CD4-positive, alpha-beta T cell (primary cell): ENCODE measurements at regions of chr14 and their contacts with region 1.

Region 1: GRCh38 chr14:75654127-75654732 is 6.4 kb downstream of the ERG28 start:
- DNase-seq: peak; percentile 64 to 91 (median 78)
- ATAC-seq: peak; percentile 98
- H3K4me3 ChIP-seq: no peak overlapping the region
- H3K4me3 Mint-ChIP-seq: no peak overlapping the region
- H3K27ac ChIP-seq: no peak overlapping the region
- H3K27ac Mint-ChIP-seq: no peak overlapping the region
- H3K4me1 ChIP-seq: peaks cover 2% of the 10 kb centered on the region
- H3K4me1 Mint-ChIP-seq: peaks cover 18% of the 10 kb centered on the region
- H3K27me3 ChIP-seq: no peaks in the 10 kb centered on the region
- H3K27me3 Mint-ChIP-seq: no peaks in the 10 kb centered on the region
- CTCF ChIP-seq: peak; percentile 94

Region 2: GRCh38 chr14:75132382-75133086 is 521.7 kb before region 1 on chr14:
- CTCF ChIA-PET with region 1: no interaction called
- POLR2A ChIA-PET with region 1: no interaction called
- intact Hi-C with region 1: loop called in 1 of 2 experiments (anchors 5 kb)
- DNase-seq: peak in 9 of 14 experiments; percentile 6 to 87 (median 46)
- ATAC-seq: peak; percentile 95
- H3K4me3 ChIP-seq: no peak overlapping the region
- H3K4me3 Mint-ChIP-seq: no peak overlapping the region
- H3K27ac ChIP-seq: no peak overlapping the region
- H3K27ac Mint-ChIP-seq: peak overlapping the region; percentile 2
- H3K4me1 ChIP-seq: peaks cover 10% of the 10 kb centered on the region
- H3K4me1 Mint-ChIP-seq: peaks cover 15% of the 10 kb centered on the region
- H3K27me3 ChIP-seq: no peaks in the 10 kb centered on the region
- H3K27me3 Mint-ChIP-seq: no peaks in the 10 kb centered on the region
- CTCF ChIP-seq: peak; percentile 73

Region 3: DNA sequence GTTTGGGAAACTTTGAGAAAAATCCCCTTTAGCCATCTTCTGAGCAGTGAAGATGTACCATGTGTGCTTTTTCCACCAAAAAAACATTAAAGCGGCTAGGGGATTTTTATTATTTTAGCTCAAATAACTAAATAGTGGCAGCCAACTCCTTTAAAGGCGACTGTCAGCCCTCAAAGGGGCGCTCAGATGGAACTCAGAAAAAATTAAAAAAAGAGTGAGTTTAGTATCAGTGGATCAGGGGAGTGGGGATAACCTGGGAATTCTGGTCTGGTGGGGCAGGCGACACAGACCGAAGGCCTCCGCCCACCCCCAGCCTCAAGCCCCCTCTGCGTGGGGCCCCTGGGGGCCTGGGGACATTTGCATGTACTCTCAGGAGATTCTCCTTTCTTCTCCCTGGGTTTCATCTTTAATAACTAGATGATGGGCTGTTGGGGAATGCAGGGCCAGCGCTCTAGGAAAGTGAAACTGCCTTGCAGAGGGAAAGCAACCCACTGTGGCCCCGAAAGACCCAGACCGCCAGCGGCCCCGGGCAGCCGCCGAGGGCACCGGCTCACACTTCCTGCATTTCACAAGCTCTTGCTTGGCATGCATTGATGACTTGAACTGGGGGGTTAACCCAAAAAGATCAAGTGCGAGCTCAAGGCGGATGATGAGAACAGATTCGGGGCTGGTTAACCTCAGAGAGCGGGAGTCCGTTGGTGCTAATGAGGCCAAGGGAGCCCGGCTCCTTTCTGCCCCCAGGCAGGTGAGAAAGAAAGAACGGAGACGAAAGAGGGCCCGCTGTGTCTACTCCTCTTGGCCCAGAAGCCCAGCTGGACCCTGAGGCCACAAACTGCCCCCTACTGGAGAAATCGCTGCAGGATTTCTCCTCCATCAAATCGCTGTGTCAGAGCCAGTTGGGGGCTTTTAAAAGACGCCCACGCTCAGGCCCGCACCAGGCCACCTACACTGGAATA is 139.3 kb before region 1 on chr14:
- CTCF ChIA-PET with region 1: interaction called, 3 read pairs
- POLR2A ChIA-PET with region 1: no interaction called
- intact Hi-C with region 1: loop called (anchors 5 to 10 kb)
- DNase-seq: peak; percentile 20 to 80 (median 41)
- ATAC-seq: peak; percentile 77
- H3K4me3 ChIP-seq: peak overlapping the region; percentile 54
- H3K4me3 Mint-ChIP-seq: peak overlapping the region; percentile 89
- H3K27ac ChIP-seq: peak overlapping the region; percentile 29 to 67
- H3K27ac Mint-ChIP-seq: peak overlapping the region; percentile 72
- H3K4me1 ChIP-seq: peaks cover 38% of the 10 kb centered on the region
- H3K4me1 Mint-ChIP-seq: peaks cover 49% of the 10 kb centered on the region
- H3K27me3 ChIP-seq: no peaks in the 10 kb centered on the region
- H3K27me3 Mint-ChIP-seq: no peaks in the 10 kb centered on the region
- CTCF ChIP-seq: no peak

Region 4: DNA sequence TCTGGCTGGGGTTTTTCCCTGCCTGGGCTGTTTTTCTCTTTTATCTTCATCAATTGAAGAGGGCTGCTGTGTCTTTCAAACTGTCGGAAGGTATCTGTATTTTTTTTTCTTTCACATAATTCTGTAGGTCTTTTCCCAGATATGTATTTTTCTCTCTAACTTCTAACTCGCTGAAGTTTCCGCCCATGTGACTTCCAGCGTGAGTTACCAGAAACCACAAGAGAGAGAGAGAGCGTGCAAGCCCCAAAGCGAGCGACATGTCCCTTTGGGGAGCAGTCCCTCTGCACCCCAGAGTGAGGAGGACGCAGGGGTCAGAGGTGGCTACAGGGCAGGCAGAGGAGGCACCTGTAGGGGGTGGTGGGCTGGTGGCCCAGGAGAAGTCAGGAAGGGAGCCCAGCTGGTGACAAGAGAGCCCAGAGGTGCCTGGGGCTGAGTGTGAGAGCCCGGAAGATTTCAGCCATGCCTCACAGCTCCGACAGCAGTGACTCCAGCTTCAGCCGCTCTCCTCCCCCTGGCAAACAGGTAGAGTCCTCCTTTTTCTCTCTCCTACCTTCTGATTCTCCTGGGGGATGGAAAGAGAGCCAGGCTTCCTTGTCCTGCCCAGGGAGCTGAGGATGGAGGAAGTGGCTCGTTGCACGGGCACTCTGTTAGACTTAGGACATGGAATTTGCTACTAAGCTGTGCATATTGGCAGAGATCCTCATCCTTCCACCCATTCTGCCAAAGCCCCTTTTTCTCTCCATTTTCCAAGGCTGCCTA is 131.8 kb before region 1 on chr14 and contains the start of gene BATF:
- CTCF ChIA-PET with region 1: interaction called, 3 read pairs
- POLR2A ChIA-PET with region 1: no interaction called
- intact Hi-C with region 1: loop called (anchors 5 to 10 kb)
- DNase-seq: peak; percentile 57 to 91 (median 69)
- ATAC-seq: peak; percentile 80
- H3K4me3 ChIP-seq: peak within 1 kb of the TSS; percentile 67
- H3K4me3 Mint-ChIP-seq: peak within 1 kb of the TSS; percentile 100
- H3K27ac ChIP-seq: peak within 1 kb of the TSS; percentile 76 to 87
- H3K27ac Mint-ChIP-seq: peak within 1 kb of the TSS; percentile 96
- H3K4me1 ChIP-seq: peaks cover 69% of the 10 kb centered on the region
- H3K4me1 Mint-ChIP-seq: peaks cover 81% of the 10 kb centered on the region
- H3K27me3 ChIP-seq: no peaks in the 10 kb centered on the region
- H3K27me3 Mint-ChIP-seq: no peaks in the 10 kb centered on the region
- CTCF ChIP-seq: no peak
- total RNA-seq, gene BATF: 6.7 to 7.8 TPM

Region 5: DNA sequence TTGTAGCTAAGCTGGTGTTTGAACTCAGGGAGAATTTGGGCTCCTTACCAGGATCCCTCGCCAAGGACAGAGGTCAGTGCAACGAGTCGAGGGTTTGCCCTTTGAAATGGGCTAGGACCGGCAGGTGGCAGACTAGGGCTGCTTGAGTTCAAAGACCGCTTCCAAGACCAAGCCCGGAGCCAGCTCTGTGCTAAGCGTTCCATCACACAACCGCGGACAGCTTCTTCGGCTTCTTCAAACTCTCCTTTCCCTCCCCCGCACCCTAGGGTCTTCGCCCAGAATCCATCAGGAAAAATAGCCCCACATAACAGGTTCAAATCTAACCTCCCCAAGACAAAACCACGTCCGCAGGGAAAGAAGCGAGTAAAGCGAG is 76.5 kb before region 1 on chr14:
- CTCF ChIA-PET with region 1: interaction called, 47 read pairs
- POLR2A ChIA-PET with region 1: interaction called, 23 read pairs
- intact Hi-C with region 1: loop called (anchors 1 kb)
- DNase-seq: peak; percentile 46 to 85 (median 67)
- ATAC-seq: peak; percentile 85
- H3K4me3 ChIP-seq: peak overlapping the region; percentile 81
- H3K4me3 Mint-ChIP-seq: peak overlapping the region; percentile 92
- H3K27ac ChIP-seq: no peak overlapping the region
- H3K27ac Mint-ChIP-seq: peak overlapping the region; percentile 64
- H3K4me1 ChIP-seq: peaks cover 28% of the 10 kb centered on the region
- H3K4me1 Mint-ChIP-seq: peaks cover 25% of the 10 kb centered on the region
- H3K27me3 ChIP-seq: no peaks in the 10 kb centered on the region
- H3K27me3 Mint-ChIP-seq: no peaks in the 10 kb centered on the region
- CTCF ChIP-seq: peak; percentile 83

Region 6: GRCh38 chr14:75626863-75627262 is 27.4 kb before region 1 on chr14:
- CTCF ChIA-PET with region 1: no interaction called
- POLR2A ChIA-PET with region 1: no interaction called
- intact Hi-C with region 1: no loop called
- DNase-seq: no peak
- ATAC-seq: no peak
- H3K4me3 ChIP-seq: no peak overlapping the region
- H3K4me3 Mint-ChIP-seq: no peak overlapping the region
- H3K27ac ChIP-seq: no peak overlapping the region
- H3K27ac Mint-ChIP-seq: no peak overlapping the region
- H3K4me1 ChIP-seq: no peaks in the 10 kb centered on the region
- H3K4me1 Mint-ChIP-seq: no peaks in the 10 kb centered on the region
- H3K27me3 ChIP-seq: no peaks in the 10 kb centered on the region
- H3K27me3 Mint-ChIP-seq: no peaks in the 10 kb centered on the region
- CTCF ChIP-seq: no peak

Region 7: GRCh38 chr14:76151398-76152339 is 497.4 kb after region 1 on chr14 and contains the start of gene GPATCH2L:
- CTCF ChIA-PET with region 1: no interaction called
- POLR2A ChIA-PET with region 1: no interaction called
- intact Hi-C with region 1: loop called in 1 of 2 experiments (anchors 5 kb)
- DNase-seq: peak; percentile 93 to 99 (median 96)
- ATAC-seq: peak; percentile 85
- H3K4me3 ChIP-seq: peak within 1 kb of the TSS; percentile 97
- H3K4me3 Mint-ChIP-seq: peak within 1 kb of the TSS; percentile 96
- H3K27ac ChIP-seq: peak within 1 kb of the TSS; percentile 94 to 95
- H3K27ac Mint-ChIP-seq: peak within 1 kb of the TSS; percentile 95
- H3K4me1 ChIP-seq: peaks cover 39% of the 10 kb centered on the region
- H3K4me1 Mint-ChIP-seq: peaks cover 57% of the 10 kb centered on the region
- H3K27me3 ChIP-seq: no peaks in the 10 kb centered on the region
- H3K27me3 Mint-ChIP-seq: no peaks in the 10 kb centered on the region
- CTCF ChIP-seq: no peak
- total RNA-seq, gene GPATCH2L: 56.0 to 61.5 TPM